Activated B cell treated with CpG ODN at 0.5 μM for 24 hours (primary cell): ENCODE measurements at regions of chr3 and their contacts with region 1.

Region 1: DNA sequence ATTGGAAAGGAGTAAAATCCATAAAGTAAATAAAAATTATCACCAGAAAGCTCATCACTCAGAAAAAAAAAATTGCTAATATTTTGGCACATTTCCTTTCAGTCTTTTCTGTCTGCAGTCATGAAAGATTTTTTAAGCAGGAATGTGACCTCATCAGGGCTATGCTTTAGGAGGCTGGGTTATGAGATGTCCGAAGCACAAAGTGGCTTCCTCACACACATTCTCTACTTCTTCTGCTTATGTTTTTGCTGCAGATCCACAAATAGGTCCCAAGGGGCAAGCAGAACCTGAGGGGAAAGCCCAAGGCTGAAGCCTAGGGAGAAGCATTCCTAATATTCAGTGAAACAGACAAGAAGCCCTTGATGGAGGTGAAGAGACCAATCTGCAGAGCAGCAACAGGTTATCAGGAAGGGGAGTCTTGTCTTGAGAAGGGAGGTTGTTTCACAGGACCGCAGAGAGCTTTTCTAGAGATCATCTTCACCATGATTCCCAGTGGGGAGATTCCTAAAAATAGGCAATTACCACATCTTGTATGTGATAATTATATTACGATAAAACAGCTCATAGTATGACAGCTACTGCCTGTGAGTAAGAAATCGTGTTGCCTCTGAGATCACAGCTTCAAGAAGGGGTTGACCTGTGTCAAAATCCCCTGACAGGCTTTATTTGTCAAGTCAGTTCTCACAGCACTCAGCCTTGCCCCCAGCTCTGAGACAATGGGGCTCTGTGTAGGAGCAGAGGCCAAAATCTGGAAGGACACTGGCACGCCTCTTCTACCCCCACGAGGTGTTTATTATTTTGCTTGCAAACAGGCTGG is 60.5 kb downstream of the IGF2BP2 start:
- DNase-seq: no peak
- ATAC-seq: no peak
- H3K4me3 Mint-ChIP-seq: no peak overlapping the region
- H3K27ac Mint-ChIP-seq: no peak overlapping the region
- H3K4me1 Mint-ChIP-seq: no peaks in the 10 kb centered on the region
- H3K27me3 Mint-ChIP-seq: peaks cover 26% of the 10 kb centered on the region
- CTCF ChIP-seq: no peak

Region 2: GRCh38 chr3:185659942-185660921 is 104.1 kb before region 1 on chr3:
- CTCF ChIA-PET with region 1: interaction called, 71 read pairs
- POLR2A ChIA-PET with region 1: no interaction called
- intact Hi-C with region 1: loop called (anchors 1 kb)
- DNase-seq: peak; percentile 37
- ATAC-seq: peak; percentile 77
- H3K4me3 Mint-ChIP-seq: no peak overlapping the region
- H3K27ac Mint-ChIP-seq: no peak overlapping the region
- H3K4me1 Mint-ChIP-seq: no peaks in the 10 kb centered on the region
- H3K27me3 Mint-ChIP-seq: peaks cover 17% of the 10 kb centered on the region
- CTCF ChIP-seq: no peak

Region 3: DNA sequence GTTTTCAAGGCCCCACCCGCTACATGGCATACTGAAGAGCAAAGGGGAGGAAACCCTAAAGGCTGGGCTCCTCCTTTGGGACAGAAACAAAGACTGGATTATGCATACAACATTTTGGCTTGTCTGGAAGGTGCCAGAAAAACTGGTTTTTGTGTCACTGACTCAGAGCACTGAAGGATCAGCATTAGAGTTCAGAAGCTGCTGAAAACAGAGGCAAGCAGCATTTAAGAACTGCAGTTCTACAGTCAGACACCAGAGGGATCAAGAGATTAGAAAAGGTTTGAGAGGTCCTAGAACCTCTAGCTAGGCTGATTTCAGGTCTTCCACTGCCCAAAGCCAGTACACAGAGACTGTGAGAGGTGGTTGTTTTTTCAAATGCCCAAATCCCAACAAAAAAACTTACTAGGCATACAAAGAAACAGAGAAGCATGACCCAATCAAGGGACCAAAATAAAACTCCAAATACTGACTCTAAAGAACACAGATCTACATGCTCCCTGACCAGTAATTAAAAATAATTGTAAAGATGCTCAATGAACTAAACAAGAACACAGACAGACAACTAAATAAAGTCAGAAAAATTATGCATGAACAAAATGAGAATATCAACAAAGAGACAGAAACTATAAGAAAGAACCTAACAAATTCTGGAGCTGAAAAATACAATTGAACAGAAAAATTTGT is 87.1 kb before region 1 on chr3:
- CTCF ChIA-PET with region 1: interaction called, 10 read pairs
- POLR2A ChIA-PET with region 1: no interaction called
- intact Hi-C with region 1: loop called (anchors 1 kb)
- DNase-seq: no peak
- ATAC-seq: no peak
- H3K4me3 Mint-ChIP-seq: no peak overlapping the region
- H3K27ac Mint-ChIP-seq: no peak overlapping the region
- H3K4me1 Mint-ChIP-seq: no peaks in the 10 kb centered on the region
- H3K27me3 Mint-ChIP-seq: peaks cover 7% of the 10 kb centered on the region
- CTCF ChIP-seq: no peak

Region 4: GRCh38 chr3:185733980-185734724 is 30.2 kb before region 1 on chr3:
- CTCF ChIA-PET with region 1: interaction called, 11 read pairs
- POLR2A ChIA-PET with region 1: no interaction called
- intact Hi-C with region 1: loop called (anchors 1 kb)
- DNase-seq: no peak
- ATAC-seq: no peak
- H3K4me3 Mint-ChIP-seq: no peak overlapping the region
- H3K27ac Mint-ChIP-seq: no peak overlapping the region
- H3K4me1 Mint-ChIP-seq: no peaks in the 10 kb centered on the region
- H3K27me3 Mint-ChIP-seq: peaks cover 3% of the 10 kb centered on the region
- CTCF ChIP-seq: no peak

Region 5: GRCh38 chr3:185781759-185782158 is 17.4 kb after region 1 on chr3:
- CTCF ChIA-PET with region 1: interaction called, 15 read pairs
- POLR2A ChIA-PET with region 1: no interaction called
- intact Hi-C with region 1: no loop called
- DNase-seq: no peak
- ATAC-seq: no peak
- H3K4me3 Mint-ChIP-seq: no peak overlapping the region
- H3K27ac Mint-ChIP-seq: no peak overlapping the region
- H3K4me1 Mint-ChIP-seq: no peaks in the 10 kb centered on the region
- H3K27me3 Mint-ChIP-seq: no peaks in the 10 kb centered on the region
- CTCF ChIP-seq: no peak

Region 6: DNA sequence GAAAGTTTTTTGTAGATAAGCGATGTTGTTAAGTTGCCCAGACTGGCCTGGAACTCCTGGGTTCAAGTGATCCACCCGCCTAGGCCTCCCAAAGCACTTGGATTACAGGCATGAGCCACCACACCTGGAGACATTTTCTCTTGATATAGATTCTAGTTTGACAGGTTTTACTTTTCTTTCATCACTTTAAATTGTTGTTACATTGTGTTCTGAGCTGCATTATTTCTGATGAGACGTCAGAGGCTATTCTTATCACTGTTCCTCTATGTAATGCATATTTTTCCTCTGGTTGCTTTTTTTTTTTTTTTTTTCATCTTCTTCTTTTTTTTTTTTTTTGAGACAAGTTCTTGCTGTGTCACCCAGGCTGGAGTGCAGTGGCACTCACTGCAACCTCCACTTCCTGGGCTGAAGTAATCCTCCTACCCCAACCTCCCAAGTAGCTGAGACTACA is 132.2 kb after region 1 on chr3:
- CTCF ChIA-PET with region 1: no interaction called
- POLR2A ChIA-PET with region 1: no interaction called
- intact Hi-C with region 1: no loop called
- DNase-seq: no peak
- ATAC-seq: no peak
- H3K4me3 Mint-ChIP-seq: no peak overlapping the region
- H3K27ac Mint-ChIP-seq: no peak overlapping the region
- H3K4me1 Mint-ChIP-seq: no peaks in the 10 kb centered on the region
- H3K27me3 Mint-ChIP-seq: peaks cover 11% of the 10 kb centered on the region
- CTCF ChIP-seq: no peak